Thyroid gland (tissue), 4 donors: ENCODE measurements at regions of chr16 and their contacts with region 1.

Region 1: DNA sequence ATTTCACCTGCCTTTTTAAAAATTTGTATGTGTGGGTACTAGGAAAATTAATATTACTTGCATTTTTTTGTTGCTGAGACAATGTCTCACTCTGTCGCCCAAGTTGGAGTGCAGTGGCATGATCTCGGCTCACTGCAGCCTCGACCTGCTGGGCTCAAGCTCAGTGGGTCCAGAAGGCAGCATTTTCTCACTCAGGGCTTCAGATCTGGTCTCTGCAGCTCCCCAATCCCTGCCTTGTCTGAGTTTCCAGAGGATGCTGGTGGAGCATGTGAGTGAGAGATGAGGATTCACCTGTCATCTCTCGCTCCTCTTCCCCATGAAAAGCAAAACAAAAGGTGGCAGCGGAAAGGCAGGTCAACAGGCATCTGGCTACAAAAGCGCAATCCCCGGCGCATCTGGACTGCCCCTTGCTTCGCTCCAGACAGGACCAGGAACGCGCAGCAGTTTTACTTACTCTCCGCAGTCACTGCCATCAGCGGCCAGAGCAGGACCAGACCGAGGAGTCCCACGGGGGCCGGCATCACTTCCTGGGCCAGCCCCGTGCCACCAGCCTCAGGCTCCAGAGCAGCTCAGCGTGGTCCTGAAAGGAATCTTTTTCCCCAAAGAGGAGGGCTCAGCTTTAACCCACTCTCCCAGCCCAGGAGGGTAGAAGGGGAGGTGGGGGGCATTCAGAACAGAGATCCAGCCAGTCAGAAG is 59.9 kb downstream of the LITAF start:
- DNase-seq: no peak
- H3K4me3 ChIP-seq: no peak overlapping the region
- H3K27ac ChIP-seq: no peak overlapping the region
- H3K4me1 ChIP-seq: no peaks in the 10 kb centered on the region
- H3K27me3 ChIP-seq: no peaks in the 10 kb centered on the region
- CTCF ChIP-seq: no peak
- POLR2A ChIP-seq: no peak

Region 2: GRCh38 chr16:11639925-11640899 is 113.4 kb after region 1 on chr16:
- intact Hi-C with region 1: loop called (anchors 5 kb)
- DNase-seq: peak; percentile 88 to 90
- H3K4me3 ChIP-seq: no peak overlapping the region
- H3K27ac ChIP-seq: peak overlapping the region; percentile 88 to 97 (median 92)
- H3K4me1 ChIP-seq: peaks cover 15 to 21% of the 10 kb centered on the region in 2 donors
- H3K27me3 ChIP-seq: no peaks in the 10 kb centered on the region
- CTCF ChIP-seq: no peak
- POLR2A ChIP-seq: peak in 1 of 2 donors; percentile 76

Region 3: GRCh38 chr16:11669380-11670146 is 142.8 kb after region 1 on chr16:
- intact Hi-C with region 1: no loop called
- DNase-seq: peak; percentile 39 to 47
- H3K4me3 ChIP-seq: peak overlapping the region in 2 of 3 donors; percentile 50 to 92
- H3K27ac ChIP-seq: peak overlapping the region; percentile 33 to 66 (median 63)
- H3K4me1 ChIP-seq: peaks cover 25 to 38% of the 10 kb centered on the region in 2 donors
- H3K27me3 ChIP-seq: no peaks in the 10 kb centered on the region
- CTCF ChIP-seq: no peak
- POLR2A ChIP-seq: no peak